ENCODE measurements at regions of chr10 and their contacts with region 1.

Region 1: GRCh38 chr10:101840741-101841453 is 2.7 kb downstream of the KCNIP2 start:
- DNase-seq: peak; percentile 85
- ATAC-seq: peak; percentile 65
- H3K4me3 Mint-ChIP-seq: peak overlapping the region; percentile 77
- H3K27ac Mint-ChIP-seq: no peak overlapping the region
- H3K4me1 Mint-ChIP-seq: peaks cover 45% of the 10 kb centered on the region
- H3K27me3 Mint-ChIP-seq: peaks cover 14% of the 10 kb centered on the region
- CTCF ChIP-seq: peak; percentile 97

Region 2: DNA sequence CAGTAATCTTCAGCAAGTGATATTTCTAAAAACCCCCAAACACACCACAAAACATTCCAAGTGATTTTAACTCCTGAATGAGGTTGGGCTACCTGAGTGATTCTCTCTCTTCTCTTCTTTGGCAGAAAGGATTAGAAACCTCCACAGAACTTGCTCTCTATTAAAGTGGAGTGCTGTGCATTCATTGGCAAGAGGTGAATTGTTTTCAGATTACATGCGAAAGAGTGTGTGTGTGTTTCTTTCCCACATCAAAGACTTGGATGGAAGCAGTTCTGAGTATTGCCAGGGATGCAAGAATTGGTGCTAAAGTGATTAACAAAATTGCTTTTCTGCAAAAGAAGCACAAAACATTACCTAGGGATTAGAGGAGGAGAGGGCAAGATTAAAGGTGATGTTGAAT is 132.8 kb before region 1 on chr10:
- CTCF ChIA-PET with region 1: no interaction called
- POLR2A ChIA-PET with region 1: no interaction called
- intact Hi-C with region 1: no loop called
- DNase-seq: no peak
- ATAC-seq: no peak
- H3K4me3 Mint-ChIP-seq: no peak overlapping the region
- H3K27ac Mint-ChIP-seq: no peak overlapping the region
- H3K4me1 Mint-ChIP-seq: peaks cover 17% of the 10 kb centered on the region
- H3K27me3 Mint-ChIP-seq: peaks cover 46% of the 10 kb centered on the region
- CTCF ChIP-seq: no peak

Region 3: DNA sequence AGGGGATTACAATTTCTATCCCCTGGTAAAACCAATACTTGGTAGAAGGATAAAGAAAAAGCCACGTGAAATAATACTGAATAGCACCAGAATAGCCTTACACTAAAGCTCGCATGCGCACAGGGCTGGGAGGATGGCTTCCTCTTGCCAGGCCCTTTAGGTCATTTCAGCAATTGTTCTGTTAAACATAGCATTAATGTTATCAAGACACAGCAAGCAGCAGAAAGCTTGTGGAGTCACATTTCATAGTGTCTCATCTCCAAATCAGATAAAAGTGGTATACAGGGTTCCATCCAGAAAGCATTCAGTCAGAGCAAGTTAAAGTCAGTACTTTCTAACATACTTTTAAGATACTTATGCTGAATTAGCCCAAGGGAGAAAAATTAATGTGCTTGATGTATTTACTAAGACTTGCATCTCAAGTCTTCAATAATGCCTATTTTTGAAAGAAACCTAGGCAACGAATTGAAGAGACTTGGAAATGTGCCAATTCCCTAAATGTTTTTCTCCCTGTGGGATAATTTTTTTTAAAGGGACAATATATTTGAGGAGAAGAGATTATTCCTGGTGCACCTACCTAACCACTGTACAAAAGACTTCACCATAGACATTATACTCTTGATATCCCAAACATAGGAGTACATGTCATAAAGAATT is 43.4 kb before region 1 on chr10:
- CTCF ChIA-PET with region 1: interaction called, 13 read pairs
- POLR2A ChIA-PET with region 1: no interaction called
- intact Hi-C with region 1: no loop called
- DNase-seq: no peak
- ATAC-seq: no peak
- H3K4me3 Mint-ChIP-seq: no peak overlapping the region
- H3K27ac Mint-ChIP-seq: peak overlapping the region; percentile 67
- H3K4me1 Mint-ChIP-seq: peaks cover 25% of the 10 kb centered on the region
- H3K27me3 Mint-ChIP-seq: no peaks in the 10 kb centered on the region
- CTCF ChIP-seq: no peak

Region 4: GRCh38 chr10:101858723-101859500 is 18.0 kb after region 1 on chr10:
- CTCF ChIA-PET with region 1: interaction called, 42 read pairs
- POLR2A ChIA-PET with region 1: interaction called, 4 read pairs
- intact Hi-C with region 1: no loop called
- DNase-seq: no peak
- ATAC-seq: peak; percentile 56
- H3K4me3 Mint-ChIP-seq: no peak overlapping the region
- H3K27ac Mint-ChIP-seq: no peak overlapping the region
- H3K4me1 Mint-ChIP-seq: peaks cover 4% of the 10 kb centered on the region
- H3K27me3 Mint-ChIP-seq: no peaks in the 10 kb centered on the region
- CTCF ChIP-seq: no peak

Region 5: GRCh38 chr10:101889256-101890210 is 48.6 kb after region 1 on chr10:
- CTCF ChIA-PET with region 1: interaction called, 22 read pairs
- POLR2A ChIA-PET with region 1: interaction called, 3 read pairs
- intact Hi-C with region 1: no loop called
- DNase-seq: peak; percentile 92
- ATAC-seq: peak; percentile 80
- H3K4me3 Mint-ChIP-seq: no peak overlapping the region
- H3K27ac Mint-ChIP-seq: no peak overlapping the region
- H3K4me1 Mint-ChIP-seq: no peaks in the 10 kb centered on the region
- H3K27me3 Mint-ChIP-seq: no peaks in the 10 kb centered on the region
- CTCF ChIP-seq: peak; percentile 85

Region 6: DNA sequence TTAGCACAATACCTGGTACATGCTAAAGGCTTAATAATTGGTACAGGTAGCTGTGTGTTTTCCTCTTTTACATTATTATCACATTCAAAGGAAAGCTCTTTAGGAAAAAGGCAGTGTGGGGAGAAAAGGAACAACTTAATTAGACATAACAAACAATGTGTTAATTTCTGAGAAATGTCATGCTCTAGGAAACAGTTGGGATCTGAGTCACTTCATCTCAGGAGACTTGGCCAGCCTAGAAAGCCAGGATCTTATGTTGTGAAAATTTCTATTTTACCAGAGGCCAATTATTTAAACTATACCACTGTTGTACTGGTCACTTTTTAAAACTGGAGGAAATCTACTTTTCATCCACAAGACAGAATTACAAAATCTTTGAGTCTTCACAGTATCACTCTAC is 175.5 kb after region 1 on chr10:
- CTCF ChIA-PET with region 1: interaction called, 200 read pairs
- POLR2A ChIA-PET with region 1: no interaction called
- intact Hi-C with region 1: loop called (anchors 2 kb)
- DNase-seq: no peak
- ATAC-seq: no peak
- H3K4me3 Mint-ChIP-seq: no peak overlapping the region
- H3K27ac Mint-ChIP-seq: no peak overlapping the region
- H3K4me1 Mint-ChIP-seq: peaks cover 3% of the 10 kb centered on the region
- H3K27me3 Mint-ChIP-seq: no peaks in the 10 kb centered on the region
- CTCF ChIP-seq: no peak

Region 7: DNA sequence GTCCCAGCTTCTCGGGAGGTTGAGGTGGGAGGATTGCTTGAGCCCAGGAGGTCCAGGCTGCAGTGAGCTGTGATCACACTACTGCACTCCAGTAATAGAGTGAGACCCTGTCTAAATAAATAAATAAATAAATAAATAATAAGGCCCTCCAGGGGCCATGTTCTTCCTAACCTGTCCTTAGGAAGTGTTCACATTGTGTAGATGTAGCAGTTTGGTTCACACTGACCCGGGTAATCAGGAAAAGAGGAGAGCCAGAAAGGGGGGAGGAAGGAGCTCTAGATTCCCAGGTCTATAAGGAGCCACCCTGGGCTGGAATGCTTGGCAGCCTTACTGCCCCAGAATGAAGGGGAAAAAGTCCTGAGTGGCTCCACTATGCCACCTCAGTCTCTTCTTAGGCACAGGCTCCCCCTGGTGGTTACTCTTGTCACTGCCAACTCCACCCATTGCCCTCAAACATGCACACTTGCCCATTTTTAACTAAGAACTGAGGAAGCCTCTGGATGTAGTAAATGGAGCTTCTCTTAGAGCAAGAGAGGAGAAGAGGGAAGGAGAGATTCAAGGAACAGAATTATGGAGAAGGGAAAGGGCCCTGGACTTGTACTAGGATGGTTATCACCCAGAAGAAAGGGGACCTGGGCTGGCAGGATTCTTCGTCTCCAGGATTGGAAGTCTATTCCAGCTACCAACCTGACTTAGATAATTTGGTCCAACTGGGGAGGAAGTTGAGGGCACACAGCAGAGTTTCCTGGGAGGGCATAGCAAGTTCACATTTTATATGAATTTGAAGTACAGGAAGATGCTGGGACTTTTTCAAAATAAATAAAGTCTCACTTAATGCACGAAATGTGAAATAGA is 232.0 kb after region 1 on chr10:
- CTCF ChIA-PET with region 1: interaction called, 151 read pairs
- POLR2A ChIA-PET with region 1: no interaction called
- intact Hi-C with region 1: loop called (anchors 5 kb)
- DNase-seq: peak; percentile 89
- ATAC-seq: peak; percentile 93
- H3K4me3 Mint-ChIP-seq: no peak overlapping the region
- H3K27ac Mint-ChIP-seq: no peak overlapping the region
- H3K4me1 Mint-ChIP-seq: peaks cover 2% of the 10 kb centered on the region
- H3K27me3 Mint-ChIP-seq: no peaks in the 10 kb centered on the region
- CTCF ChIP-seq: peak; percentile 93